Left cardiac atrium (tissue), 4 donors: ENCODE measurements at regions of chr4 and their contacts with region 1.

Region 1: GRCh38 chr4:184384056-184384809 is 90.1 kb downstream of the IRF2 start:
- DNase-seq: peak; percentile 61
- ATAC-seq: peak; percentile 73 to 81

Region 2: DNA sequence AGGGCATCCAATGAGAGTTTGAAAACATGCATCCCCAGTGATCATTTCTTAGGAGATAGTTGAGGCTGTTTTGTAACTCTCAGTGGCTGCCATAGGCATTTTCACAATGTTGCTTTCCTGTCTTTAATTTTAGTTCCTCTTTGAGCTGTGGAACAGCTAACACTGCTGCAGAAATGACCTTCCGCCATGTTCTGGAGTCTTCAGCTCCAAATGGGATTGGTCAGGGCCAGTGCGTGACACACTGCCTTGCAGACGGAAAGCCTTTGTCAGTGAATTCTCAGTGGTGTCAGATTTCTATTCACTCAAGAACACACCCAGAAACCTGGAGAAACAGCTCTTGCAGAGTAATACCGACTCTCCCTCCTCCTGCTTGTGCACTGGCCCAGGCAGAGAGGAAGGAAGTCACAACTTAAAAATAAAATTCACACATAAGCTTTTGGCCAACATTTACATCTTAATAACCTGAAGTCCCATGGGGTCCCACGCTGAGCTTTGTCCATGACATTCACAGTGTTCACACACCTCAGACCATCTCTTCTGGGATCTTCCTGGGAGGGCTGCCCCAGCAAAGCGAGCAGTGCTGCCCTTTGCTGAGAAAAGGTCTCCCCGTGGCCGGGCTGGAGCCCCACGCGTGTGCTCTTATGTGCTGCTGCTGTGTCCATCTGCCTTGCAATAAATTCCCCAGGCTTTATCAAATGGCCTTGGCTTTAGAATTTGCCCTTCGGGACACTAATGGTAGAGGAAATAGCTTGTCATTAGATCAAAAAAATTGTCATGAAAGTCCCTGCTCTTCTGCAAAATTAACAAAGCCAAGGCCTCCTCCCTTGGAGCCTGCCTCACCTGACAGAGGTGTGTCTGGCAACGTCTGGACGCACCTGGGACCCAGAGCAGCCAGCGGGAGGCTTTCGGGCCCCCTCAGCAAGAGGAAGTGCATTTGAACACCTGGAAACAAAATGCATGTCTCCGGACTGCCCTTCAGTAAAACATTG is 36.7 kb before region 1 on chr4:
- intact Hi-C with region 1: loop called in 1 of 2 experiments (anchors 5 kb)
- DNase-seq: peak; percentile 56
- ATAC-seq: peak; percentile 49 to 53